ENCODE measurements at regions of chr4 and their contacts with region 1.

Region 1: DNA sequence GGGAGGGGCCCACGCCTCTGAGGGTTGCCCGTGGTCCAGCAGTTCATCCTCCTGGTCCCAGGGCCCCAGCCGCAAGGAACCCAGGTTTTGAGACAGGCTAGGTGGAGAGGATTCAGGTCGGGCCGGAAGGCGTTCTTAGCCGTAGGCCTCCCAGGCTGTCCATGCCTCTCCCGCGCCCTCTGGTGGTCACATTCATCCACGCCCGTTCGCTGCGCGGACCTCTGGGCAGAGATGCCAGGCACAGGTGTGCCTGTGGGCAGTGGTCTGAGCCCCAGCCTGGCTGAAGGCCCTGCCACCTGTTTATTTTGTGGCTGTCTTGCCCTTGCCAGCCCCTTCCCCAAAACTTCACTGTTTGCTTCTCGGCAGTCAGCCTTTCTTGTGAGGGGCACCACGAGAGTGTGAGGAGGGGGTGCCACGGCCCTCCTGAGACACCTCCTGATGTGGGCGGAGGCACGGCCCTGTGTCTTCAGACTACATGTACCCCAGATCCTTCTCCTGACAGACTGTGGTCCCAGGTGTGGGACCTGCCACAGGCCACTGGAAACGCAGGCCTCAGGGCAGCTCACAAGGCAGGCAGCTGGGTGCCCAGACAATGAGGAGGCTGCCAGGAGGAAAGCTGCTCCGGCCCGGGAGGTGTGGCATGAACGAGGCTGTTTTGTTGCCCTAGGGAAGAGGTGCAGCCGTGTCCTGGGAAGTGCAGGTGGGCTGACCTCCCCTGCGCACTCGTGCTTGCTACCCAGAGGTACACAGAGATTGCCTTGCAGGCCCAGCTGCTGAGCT is 5.0 kb downstream of the UVSSA start:
- DNase-seq: peak; percentile 93
- ATAC-seq: peak; percentile 48
- H3K4me3 Mint-ChIP-seq: no peak overlapping the region
- H3K27ac Mint-ChIP-seq: peak overlapping the region; percentile 58
- H3K4me1 Mint-ChIP-seq: peaks cover 28% of the 10 kb centered on the region
- H3K27me3 Mint-ChIP-seq: no peaks in the 10 kb centered on the region

Region 2: GRCh38 chr4:1130316-1131186 is 221.5 kb before region 1 on chr4:
- CTCF ChIA-PET with region 1: interaction called, 21 read pairs
- POLR2A ChIA-PET with region 1: interaction called, 3 read pairs
- DNase-seq: peak; percentile 85
- ATAC-seq: peak; percentile 99
- H3K4me3 Mint-ChIP-seq: no peak overlapping the region
- H3K27ac Mint-ChIP-seq: no peak overlapping the region
- H3K4me1 Mint-ChIP-seq: peaks cover 2% of the 10 kb centered on the region
- H3K27me3 Mint-ChIP-seq: peaks cover 19% of the 10 kb centered on the region

Region 3: GRCh38 chr4:1628892-1629698 is 277.1 kb after region 1 on chr4:
- CTCF ChIA-PET with region 1: interaction called, 18 read pairs
- POLR2A ChIA-PET with region 1: interaction called, 3 read pairs
- DNase-seq: peak; percentile 75
- ATAC-seq: peak; percentile 85
- H3K4me3 Mint-ChIP-seq: no peak overlapping the region
- H3K27ac Mint-ChIP-seq: no peak overlapping the region
- H3K4me1 Mint-ChIP-seq: no peaks in the 10 kb centered on the region
- H3K27me3 Mint-ChIP-seq: no peaks in the 10 kb centered on the region

Region 4: GRCh38 chr4:1732911-1733310 is 380.9 kb after region 1 on chr4:
- CTCF ChIA-PET with region 1: no interaction called
- POLR2A ChIA-PET with region 1: no interaction called
- DNase-seq: no peak
- ATAC-seq: no peak
- H3K4me3 Mint-ChIP-seq: no peak overlapping the region
- H3K27ac Mint-ChIP-seq: no peak overlapping the region
- H3K4me1 Mint-ChIP-seq: peaks cover 16% of the 10 kb centered on the region
- H3K27me3 Mint-ChIP-seq: no peaks in the 10 kb centered on the region